ENCODE measurements at regions of chr4 and their contacts with region 1.

Region 1: DNA sequence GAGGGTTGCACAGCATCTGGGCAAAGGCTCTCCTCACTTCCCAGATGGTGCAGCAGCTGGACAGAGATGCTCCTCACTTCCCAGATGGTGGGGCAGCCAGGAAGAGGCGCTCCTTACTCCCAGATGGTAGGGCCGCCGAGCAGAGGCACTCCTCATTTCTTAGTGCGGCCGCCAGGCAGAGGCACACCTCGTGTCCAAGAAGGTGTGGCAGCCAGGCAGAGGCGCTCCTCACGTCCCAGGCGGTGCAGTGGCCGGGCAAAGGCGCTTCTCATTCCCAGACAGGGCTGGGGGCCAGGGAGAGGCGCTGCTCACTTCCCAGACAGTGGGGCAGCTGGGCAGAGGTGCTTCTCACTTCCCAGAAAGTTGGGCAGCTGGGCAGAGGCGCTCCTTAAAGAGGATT is 48.8 kb downstream of the ZNF732 start:
- DNase-seq: no peak
- ATAC-seq: no peak
- H3K4me3 ChIP-seq: no peak overlapping the region
- H3K27ac ChIP-seq: no peak overlapping the region
- H3K4me1 ChIP-seq: no peaks in the 10 kb centered on the region
- H3K27me3 ChIP-seq: no peaks in the 10 kb centered on the region
- CTCF ChIP-seq: no peak
- POLR2A ChIP-seq: no peak

Region 2: DNA sequence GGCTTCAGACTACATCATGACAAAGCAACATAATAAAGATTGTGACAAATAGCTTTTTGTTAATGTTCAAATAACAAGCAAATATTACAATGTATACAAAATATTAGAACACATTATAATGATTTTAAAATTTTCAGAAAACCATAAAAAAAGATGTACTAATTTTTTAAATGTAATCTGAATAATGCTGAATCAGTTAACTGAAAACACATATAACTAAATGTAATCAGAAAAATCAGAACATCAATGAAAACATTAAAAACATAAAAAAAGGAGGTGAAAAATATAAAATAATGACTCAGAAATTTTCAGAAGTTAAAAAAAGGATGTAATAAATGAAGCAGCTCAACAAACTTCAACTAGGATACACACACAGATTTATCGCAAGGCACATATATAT is 188.9 kb after region 1 on chr4:
- intact Hi-C with region 1: loop called (anchors 10 kb)
- DNase-seq: no peak
- ATAC-seq: no peak
- H3K4me3 ChIP-seq: no peak overlapping the region
- H3K27ac ChIP-seq: no peak overlapping the region
- H3K4me1 ChIP-seq: no peaks in the 10 kb centered on the region
- H3K27me3 ChIP-seq: no peaks in the 10 kb centered on the region
- CTCF ChIP-seq: no peak
- POLR2A ChIP-seq: no peak